ENCODE measurements at regions of chr10 and their contacts with region 1.

Region 1: GRCh38 chr10:103416436-103417147 is 20.2 kb downstream of the PDCD11 start:
- DNase-seq: peak; percentile 27
- ATAC-seq: peak; percentile 86
- H3K4me3 ChIP-seq: no peak overlapping the region
- H3K27ac ChIP-seq: no peak overlapping the region
- H3K4me1 ChIP-seq: no peaks in the 10 kb centered on the region
- H3K27me3 ChIP-seq: no peaks in the 10 kb centered on the region
- CTCF ChIP-seq: peak; percentile 39 to 80 (median 59); a peak in 5 of 6 replicates
- EP300 ChIP-seq: no peak
- POLR2A ChIP-seq: no peak
- RAD21 ChIP-seq: peak; percentile 79

Region 2: DNA sequence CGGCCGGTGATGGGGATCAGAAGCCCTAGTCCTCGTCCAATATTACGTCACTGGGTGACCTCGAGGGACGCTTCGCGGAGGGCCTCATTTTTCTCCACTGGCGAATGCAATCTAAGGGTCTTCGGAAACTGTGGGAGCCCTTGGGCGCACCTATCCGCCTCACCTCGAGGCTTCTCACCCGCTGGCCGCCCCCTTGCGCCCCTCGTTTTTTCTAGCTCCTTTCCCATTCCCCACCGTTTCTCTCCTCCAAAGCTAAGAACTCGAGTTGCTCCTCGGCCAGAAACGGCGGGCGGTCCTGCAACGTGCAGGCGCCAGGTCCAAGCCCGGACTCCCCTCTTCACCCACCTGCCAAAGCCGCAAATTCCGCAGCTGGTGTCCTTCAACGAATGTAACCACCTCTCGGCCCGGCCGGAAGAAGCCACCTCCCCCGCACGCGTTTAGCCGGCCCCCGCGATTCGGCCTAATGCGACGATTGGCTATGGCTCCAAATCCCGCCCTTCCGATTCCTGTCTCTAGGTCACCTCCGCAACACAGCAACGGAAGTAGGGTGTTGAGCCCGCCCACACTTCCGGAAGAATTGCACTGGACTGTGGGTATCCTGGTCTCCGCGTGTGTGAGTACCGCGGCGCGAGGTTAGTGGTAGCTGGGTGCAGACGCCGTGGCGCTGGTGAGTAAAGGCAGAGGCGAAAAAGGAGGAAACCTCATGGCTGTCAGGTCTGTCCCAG is 20.4 kb before region 1 on chr10 and contains the starts of genes ATP5MK and PDCD11:
- CTCF ChIA-PET with region 1: interaction called, 15 read pairs
- POLR2A ChIA-PET with region 1: no interaction called
- RAD21 ChIA-PET with region 1: interaction called, 3 read pairs
- SMC1A ChIA-PET with region 1: interaction called, 6 read pairs
- in situ Hi-C with region 1: no loop called
- intact Hi-C with region 1: no loop called
- DNase-seq: peak; percentile 92
- ATAC-seq: peak; percentile 98
- H3K4me3 ChIP-seq: peak within 1 kb of the TSS; percentile 89
- H3K27ac ChIP-seq: peak within 1 kb of the TSS; percentile 88
- H3K4me1 ChIP-seq: peaks cover 4% of the 10 kb centered on the region; the same call in 1 of the 2 replicates
- H3K27me3 ChIP-seq: no peaks in the 10 kb centered on the region
- CTCF ChIP-seq: peak; percentile 16 to 35 (median 31); a peak in 3 of 6 replicates
- EP300 ChIP-seq: peak in 1 of 2 experiments; percentile 40; a peak in 1 of 4 replicates
- POLR2A ChIP-seq: peak; percentile 97
- RAD21 ChIP-seq: 0 out of 2 replicates have a peak, but pooled peaks have one; percentile 3
- polyA plus RNA-seq, gene ATP5MK: 1,633 to 1,790 TPM
- polyA plus RNA-seq, gene PDCD11: 13.9 to 17.2 TPM

Region 3: DNA sequence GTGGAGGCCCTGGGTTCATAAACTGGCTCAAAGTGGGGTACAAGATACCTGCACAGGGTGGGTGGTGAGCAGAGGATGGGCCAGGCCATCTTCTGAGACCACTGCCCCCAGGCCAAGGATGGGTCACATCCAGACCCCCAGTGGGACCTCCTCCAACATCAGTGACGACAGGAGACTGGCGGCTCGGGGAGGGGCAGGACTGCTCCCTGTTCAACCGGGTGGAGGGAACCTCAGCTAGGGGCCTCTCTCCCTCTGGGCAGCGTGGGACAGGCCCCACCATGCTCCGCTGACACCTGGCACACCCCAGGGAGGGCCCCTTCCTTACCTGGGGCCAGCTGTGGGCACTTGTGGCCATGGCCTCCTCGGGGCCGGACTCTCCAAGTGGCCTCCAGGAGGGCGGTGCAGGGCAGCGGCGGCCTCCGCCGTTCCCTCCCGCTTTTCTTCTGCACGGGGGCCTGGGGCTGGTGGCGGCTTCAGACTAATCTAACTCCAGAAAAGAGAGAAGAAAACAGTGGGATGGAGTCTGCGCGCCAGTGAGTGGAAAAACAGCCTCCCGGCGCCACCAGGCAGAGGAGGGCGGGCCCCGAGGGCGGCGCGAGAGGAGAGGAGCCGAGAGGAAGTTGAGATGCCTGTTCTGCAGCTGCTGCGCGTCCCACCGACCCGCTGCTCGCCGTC is 35.4 kb after region 1 on chr10 and contains the start of gene CALHM2:
- CTCF ChIA-PET with region 1: interaction called, 27 read pairs
- POLR2A ChIA-PET with region 1: no interaction called
- RAD21 ChIA-PET with region 1: interaction called, 8 read pairs
- SMC1A ChIA-PET with region 1: interaction called, 7 read pairs
- in situ Hi-C with region 1: no loop called
- intact Hi-C with region 1: no loop called
- DNase-seq: no peak
- ATAC-seq: peak; percentile 84
- H3K4me3 ChIP-seq: peak within 1 kb of the TSS; percentile 98
- H3K27ac ChIP-seq: peak within 1 kb of the TSS; percentile 83
- H3K4me1 ChIP-seq: peaks cover 22% of the 10 kb centered on the region
- H3K27me3 ChIP-seq: no peaks in the 10 kb centered on the region
- CTCF ChIP-seq: 0 out of 6 replicates have a peak, but pooled peaks of 1 of the 3 experiments have one; percentile 11
- EP300 ChIP-seq: no peak
- POLR2A ChIP-seq: peak; percentile 72
- RAD21 ChIP-seq: 0 out of 2 replicates have a peak, but pooled peaks have one; percentile 2
- polyA plus RNA-seq, gene CALHM2: 0.60 to 1.9 TPM

Region 4: GRCh38 chr10:103481974-103482531 is 65.5 kb after region 1 on chr10:
- CTCF ChIA-PET with region 1: interaction called, 195 read pairs
- POLR2A ChIA-PET with region 1: interaction called, 6 read pairs
- RAD21 ChIA-PET with region 1: interaction called, 66 read pairs
- SMC1A ChIA-PET with region 1: interaction called, 85 read pairs
- in situ Hi-C with region 1: loop called (anchors 5 kb)
- intact Hi-C with region 1: loop called (anchors 1 kb)
- DNase-seq: no peak
- ATAC-seq: peak; percentile 93
- H3K4me3 ChIP-seq: no peak overlapping the region
- H3K27ac ChIP-seq: no peak overlapping the region
- H3K4me1 ChIP-seq: no peaks in the 10 kb centered on the region
- H3K27me3 ChIP-seq: no peaks in the 10 kb centered on the region
- CTCF ChIP-seq: peak; percentile 67 to 82 (median 76)
- EP300 ChIP-seq: no peak
- POLR2A ChIP-seq: no peak
- RAD21 ChIP-seq: peak; percentile 83

Region 5: GRCh38 chr10:103534581-103535508 is 118.3 kb after region 1 on chr10:
- CTCF ChIA-PET with region 1: no interaction called
- POLR2A ChIA-PET with region 1: no interaction called
- RAD21 ChIA-PET with region 1: no interaction called
- SMC1A ChIA-PET with region 1: no interaction called
- in situ Hi-C with region 1: no loop called
- intact Hi-C with region 1: no loop called
- DNase-seq: no peak
- ATAC-seq: no peak
- H3K4me3 ChIP-seq: no peak overlapping the region
- H3K27ac ChIP-seq: no peak overlapping the region
- H3K4me1 ChIP-seq: no peaks in the 10 kb centered on the region
- H3K27me3 ChIP-seq: peaks cover 0 to 2% of the 10 kb centered on the region in 2 experiments; a peak in 2 of 4 replicates
- CTCF ChIP-seq: no peak
- EP300 ChIP-seq: no peak
- POLR2A ChIP-seq: no peak
- RAD21 ChIP-seq: no peak

Region 6: DNA sequence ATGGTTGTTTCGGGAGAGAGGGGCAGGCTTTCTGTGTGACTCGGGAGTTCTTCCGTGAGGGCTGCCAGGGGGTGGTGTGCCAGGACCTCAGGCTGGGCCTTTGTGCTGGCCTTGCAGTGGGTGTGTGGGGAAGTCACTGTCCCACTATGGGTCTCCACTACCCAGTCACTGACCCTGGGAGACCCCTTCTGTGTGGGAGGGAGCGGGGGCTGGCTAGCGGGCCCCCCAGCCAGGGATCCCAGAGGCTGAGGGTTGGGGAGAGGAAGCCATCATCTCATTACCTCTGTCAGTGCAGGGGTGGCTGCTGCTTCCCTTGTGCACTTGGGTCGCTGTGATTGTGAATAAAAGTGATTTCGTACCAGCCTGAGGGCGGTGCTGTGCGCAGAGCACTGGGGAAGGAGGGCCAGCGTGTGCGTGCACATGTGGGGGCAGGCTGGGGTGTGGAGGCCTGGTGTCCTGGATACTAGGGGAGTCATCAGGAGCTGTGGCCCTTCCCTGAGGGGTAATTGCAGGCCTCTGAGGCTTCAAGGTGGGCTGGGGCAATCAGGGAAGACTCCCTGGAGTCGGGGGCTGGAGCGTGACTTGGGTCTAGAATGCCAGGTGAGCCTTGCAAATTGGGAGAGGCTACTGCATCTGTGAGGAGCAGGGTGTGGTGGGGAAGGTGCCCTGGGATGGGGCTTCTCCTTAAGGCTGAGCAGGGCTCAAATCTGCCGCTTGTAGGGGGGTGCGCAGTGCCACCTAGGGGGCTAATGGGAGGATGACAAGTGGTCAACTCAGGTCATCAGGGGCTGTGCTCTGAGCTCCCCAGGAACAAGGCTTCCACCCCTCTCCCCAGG is 175.8 kb after region 1 on chr10:
- CTCF ChIA-PET with region 1: interaction called, 5 read pairs
- POLR2A ChIA-PET with region 1: no interaction called
- RAD21 ChIA-PET with region 1: interaction called, 3 read pairs
- SMC1A ChIA-PET with region 1: interaction called, 5 read pairs
- in situ Hi-C with region 1: no loop called
- intact Hi-C with region 1: loop called (anchors 10 kb)
- DNase-seq: no peak
- ATAC-seq: peak; percentile 95
- H3K4me3 ChIP-seq: no peak overlapping the region
- H3K27ac ChIP-seq: no peak overlapping the region
- H3K4me1 ChIP-seq: no peaks in the 10 kb centered on the region
- H3K27me3 ChIP-seq: no peaks in the 10 kb centered on the region
- CTCF ChIP-seq: peak; percentile 73 to 79 (median 77)
- EP300 ChIP-seq: no peak
- POLR2A ChIP-seq: no peak; the same call in none of the 2 replicates
- RAD21 ChIP-seq: peak; percentile 73

Region 7: GRCh38 chr10:103659674-103660363 is 243.2 kb after region 1 on chr10:
- CTCF ChIA-PET with region 1: no interaction called
- POLR2A ChIA-PET with region 1: no interaction called
- RAD21 ChIA-PET with region 1: no interaction called
- SMC1A ChIA-PET with region 1: no interaction called
- in situ Hi-C with region 1: no loop called
- intact Hi-C with region 1: no loop called
- DNase-seq: no peak
- ATAC-seq: peak; percentile 94
- H3K4me3 ChIP-seq: peak overlapping the region; percentile 20; the same call in 1 of the 2 replicates
- H3K27ac ChIP-seq: peak overlapping the region; percentile 50
- H3K4me1 ChIP-seq: peaks cover 8% of the 10 kb centered on the region
- H3K27me3 ChIP-seq: no peaks in the 10 kb centered on the region
- CTCF ChIP-seq: no peak
- EP300 ChIP-seq: no peak
- POLR2A ChIP-seq: no peak; the same call in 1 of the 2 replicates
- RAD21 ChIP-seq: no peak

Region 8: DNA sequence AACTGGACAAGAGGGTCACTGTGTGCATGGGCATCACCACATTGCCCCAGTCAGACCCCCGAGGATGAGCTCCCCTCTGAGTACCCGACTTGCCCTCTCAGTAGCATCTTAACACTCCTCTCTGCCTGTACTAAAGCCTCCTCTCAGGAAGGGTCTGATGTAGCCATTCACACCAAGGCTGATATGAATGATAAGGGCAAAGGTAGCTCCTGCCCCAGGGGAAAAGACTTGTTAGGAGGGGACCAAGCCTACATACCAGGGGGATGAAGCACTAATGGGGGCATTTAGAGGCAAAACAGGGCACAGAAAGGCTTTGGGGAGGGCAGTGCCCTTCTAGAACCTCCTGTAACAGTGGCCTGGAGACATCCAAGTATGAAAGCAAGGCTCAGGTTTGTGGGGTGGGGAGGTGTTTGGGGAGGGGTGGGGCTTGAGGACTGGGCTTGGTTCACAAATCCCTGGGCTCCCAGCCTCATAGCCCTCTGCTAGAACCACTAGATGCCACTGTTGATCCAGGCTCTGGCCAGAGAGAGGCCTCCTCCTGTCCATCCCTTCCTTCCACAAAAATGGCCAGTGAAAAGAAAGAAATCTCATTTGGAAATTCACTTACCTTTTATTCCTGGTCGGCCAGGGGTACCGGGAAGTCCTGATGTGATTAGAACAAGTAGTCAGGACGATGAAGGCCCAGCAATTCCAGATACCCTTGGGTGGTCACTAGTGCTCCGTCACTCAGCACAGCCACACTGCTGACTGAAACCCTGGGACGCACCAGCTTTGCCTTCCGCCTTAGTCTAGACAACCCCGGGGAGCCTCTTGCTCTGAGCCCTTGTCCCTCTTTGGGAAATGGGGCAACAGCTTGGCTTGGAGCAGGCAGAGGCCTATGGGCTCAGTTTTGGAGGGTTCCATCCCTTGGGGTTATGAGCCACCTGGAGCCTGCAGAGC is 628.8 kb after region 1 on chr10:
- CTCF ChIA-PET with region 1: no interaction called
- POLR2A ChIA-PET with region 1: no interaction called
- RAD21 ChIA-PET with region 1: no interaction called
- SMC1A ChIA-PET with region 1: no interaction called
- in situ Hi-C with region 1: no loop called
- intact Hi-C with region 1: no loop called
- DNase-seq: no peak
- ATAC-seq: peak; percentile 88
- H3K4me3 ChIP-seq: no peak overlapping the region
- H3K27ac ChIP-seq: no peak overlapping the region
- H3K4me1 ChIP-seq: no peaks in the 10 kb centered on the region
- H3K27me3 ChIP-seq: peaks cover 0 to 3% of the 10 kb centered on the region in 2 experiments; a peak in 3 of 4 replicates
- CTCF ChIP-seq: peak in 2 of 3 experiments; percentile 39 to 51; a peak in 3 of 6 replicates
- EP300 ChIP-seq: no peak
- POLR2A ChIP-seq: no peak
- RAD21 ChIP-seq: peak; percentile 54